AG04449 (cell line): ENCODE measurements at regions of chr18 and their contacts with region 1.

Region 1: DNA sequence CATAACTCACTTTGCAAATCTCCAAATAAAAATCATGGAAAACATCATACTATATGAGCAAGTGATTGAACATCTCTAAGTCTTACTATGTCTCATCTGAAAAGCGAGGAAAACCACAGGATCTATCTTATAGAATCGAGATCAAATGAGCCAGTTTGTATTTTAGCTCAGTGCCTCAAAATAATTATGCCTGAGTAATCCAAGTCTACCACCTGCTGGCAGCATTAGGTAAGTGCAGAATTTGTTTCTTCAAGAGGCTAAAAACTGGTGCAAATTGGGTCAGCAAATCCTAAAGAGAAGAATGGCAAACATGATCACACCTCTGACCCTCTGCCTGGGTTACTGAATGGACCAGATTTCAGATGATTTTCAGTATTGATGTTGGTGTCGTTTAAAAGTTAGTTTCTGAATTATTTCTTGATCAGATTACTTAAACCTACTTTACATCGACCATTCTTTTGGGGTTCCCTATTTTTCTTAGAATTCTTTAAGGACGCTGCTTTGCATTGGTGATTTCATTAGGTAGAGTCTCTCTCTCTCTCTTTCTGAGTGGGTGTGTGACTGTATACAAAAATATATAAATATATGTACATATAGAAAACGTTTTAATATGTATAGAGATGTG is 12.7 kb upstream of the FHOD3 start:
- DNase-seq: no peak
- H3K4me3 ChIP-seq: no peak overlapping the region
- CTCF ChIP-seq: peak; percentile 72

Region 2: DNA sequence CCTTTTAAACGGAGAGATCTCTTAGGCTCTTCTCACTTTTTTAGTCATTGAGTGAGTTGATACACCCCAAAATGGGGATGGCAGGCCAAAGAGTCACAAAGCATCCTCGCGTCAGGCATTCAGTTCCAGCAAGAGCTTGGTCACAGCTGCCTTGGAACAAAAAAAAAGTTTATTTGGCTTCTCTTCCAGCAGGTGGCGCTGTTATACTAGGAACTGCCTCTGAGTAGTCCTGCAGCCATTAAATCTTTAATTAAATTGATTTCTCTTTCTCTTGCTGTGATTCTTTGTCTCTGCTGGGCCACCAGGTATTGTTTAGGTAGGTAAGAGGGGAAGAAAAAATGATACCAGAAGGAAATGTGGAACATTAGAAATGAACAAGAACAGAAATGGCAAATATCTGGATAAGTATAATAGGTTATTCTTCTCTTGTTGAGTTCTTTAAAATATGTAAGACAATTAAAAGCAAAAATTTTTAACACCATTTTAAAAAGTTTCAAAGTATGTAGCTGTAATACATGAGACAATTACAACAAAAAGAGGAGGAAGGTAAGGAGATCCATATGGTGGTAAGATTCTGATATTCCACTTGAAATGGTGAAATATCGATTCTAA is 528.2 kb before region 1 on chr18:
- CTCF ChIA-PET with region 1: interaction called, 22 read pairs
- POLR2A ChIA-PET with region 1: no interaction called
- DNase-seq: no peak
- H3K4me3 ChIP-seq: no peak overlapping the region
- CTCF ChIP-seq: peak; percentile 53

Region 3: GRCh38 chr18:36067055-36067957 is 217.5 kb before region 1 on chr18 and contains the start of gene RPRD1A:
- CTCF ChIA-PET with region 1: interaction called, 10 read pairs
- POLR2A ChIA-PET with region 1: no interaction called
- DNase-seq: peak; percentile 46
- H3K4me3 ChIP-seq: peak within 1 kb of the TSS; percentile 91
- CTCF ChIP-seq: no peak

Region 4: GRCh38 chr18:36095936-36096519 is 188.8 kb before region 1 on chr18:
- CTCF ChIA-PET with region 1: interaction called, 289 read pairs
- POLR2A ChIA-PET with region 1: no interaction called
- DNase-seq: peak; percentile 53
- H3K4me3 ChIP-seq: no peak overlapping the region
- CTCF ChIP-seq: peak; percentile 24

Region 5: GRCh38 chr18:36129300-36130038 is 155.3 kb before region 1 on chr18 and contains the starts of genes ELP2 and SLC39A6:
- CTCF ChIA-PET with region 1: interaction called, 10 read pairs
- POLR2A ChIA-PET with region 1: no interaction called
- DNase-seq: peak; percentile 76
- H3K4me3 ChIP-seq: peak within 1 kb of the TSS; percentile 98
- CTCF ChIP-seq: no peak

Region 6: DNA sequence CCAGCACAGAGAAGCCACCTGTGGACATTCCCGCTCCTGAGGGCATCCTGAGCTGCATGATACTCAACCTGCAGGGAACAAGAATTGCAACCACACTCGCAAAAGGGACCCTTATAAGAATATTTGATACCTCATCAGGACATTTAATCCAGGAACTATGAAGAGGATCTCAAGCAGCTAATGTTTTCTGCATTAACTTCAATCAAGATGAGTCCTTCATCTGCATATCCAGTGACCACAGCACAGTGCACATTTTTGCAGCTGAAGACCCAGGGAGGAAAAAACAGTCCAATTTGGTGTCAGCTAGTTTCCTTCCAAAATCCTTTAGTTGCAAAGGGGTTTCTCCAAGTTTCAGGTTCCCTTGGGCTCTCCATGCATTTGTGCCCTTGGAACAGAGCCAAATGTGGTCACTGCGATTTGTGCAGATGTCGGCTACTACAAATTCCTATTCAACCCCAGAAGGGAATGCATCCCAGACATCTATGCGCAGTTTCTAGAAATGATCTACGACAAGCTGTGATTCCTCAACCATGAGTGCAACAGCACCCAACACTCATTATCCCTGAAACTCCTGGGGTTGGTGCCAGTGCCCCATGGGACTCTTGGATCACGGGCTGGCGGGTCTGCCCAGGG is 10.6 kb before region 1 on chr18:
- CTCF ChIA-PET with region 1: interaction called, 12 read pairs
- POLR2A ChIA-PET with region 1: no interaction called
- DNase-seq: no peak
- H3K4me3 ChIP-seq: no peak overlapping the region
- CTCF ChIP-seq: no peak

Region 7: GRCh38 chr18:36314754-36315153 is 30.0 kb after region 1 on chr18:
- CTCF ChIA-PET with region 1: no interaction called
- POLR2A ChIA-PET with region 1: no interaction called
- DNase-seq: peak; percentile 64
- H3K4me3 ChIP-seq: no peak overlapping the region
- CTCF ChIP-seq: no peak

Region 8: GRCh38 chr18:36572135-36572856 is 287.5 kb after region 1 on chr18:
- CTCF ChIA-PET with region 1: interaction called, 28 read pairs
- POLR2A ChIA-PET with region 1: no interaction called
- DNase-seq: no peak
- H3K4me3 ChIP-seq: no peak overlapping the region
- CTCF ChIP-seq: peak; percentile 56